ENCODE measurements at regions of chr1 and their contacts with region 1.

Region 1: GRCh38 chr1:203026031-203026989 is at the start of gene PPFIA4:
- DNase-seq: peak; percentile 89
- ATAC-seq: peak; percentile 90 to 93
- total RNA-seq, gene PPFIA4: 16.0 to 16.3 TPM

Region 2: GRCh38 chr1:203006948-203007871 is 19.1 kb before region 1 on chr1 and contains the start of gene TMEM183A:
- intact Hi-C with region 1: loop called in 1 of 2 experiments (anchors 1 kb)
- DNase-seq: peak; percentile 97
- ATAC-seq: peak; percentile 98 to 99
- total RNA-seq, gene TMEM183A: 25.1 to 31.8 TPM

Measured in left cardiac atrium (tissue), 4 donors.